CD8-positive, alpha-beta T cell (primary cell): ENCODE measurements at regions of chr2 and their contacts with region 1.

Region 1: GRCh38 chr2:59888015-59888414 is 665.4 kb downstream of the BCL11A start:
- DNase-seq: peak in 8 of 9 experiments; percentile 34 to 87 (median 63)
- ATAC-seq: peak; percentile 88
- H3K4me3 ChIP-seq: peak overlapping the region in 1 of 2 experiments; percentile 31
- H3K4me3 Mint-ChIP-seq: peak overlapping the region; percentile 60
- H3K27ac ChIP-seq: peak overlapping the region; percentile 16 to 21
- H3K27ac Mint-ChIP-seq: peak overlapping the region; percentile 88
- H3K4me1 ChIP-seq: peaks cover 39% of the 10 kb centered on the region
- H3K4me1 Mint-ChIP-seq: peaks cover 47% of the 10 kb centered on the region
- H3K27me3 ChIP-seq: no peaks in the 10 kb centered on the region
- H3K27me3 Mint-ChIP-seq: no peaks in the 10 kb centered on the region
- CTCF ChIP-seq: no peak

Region 2: DNA sequence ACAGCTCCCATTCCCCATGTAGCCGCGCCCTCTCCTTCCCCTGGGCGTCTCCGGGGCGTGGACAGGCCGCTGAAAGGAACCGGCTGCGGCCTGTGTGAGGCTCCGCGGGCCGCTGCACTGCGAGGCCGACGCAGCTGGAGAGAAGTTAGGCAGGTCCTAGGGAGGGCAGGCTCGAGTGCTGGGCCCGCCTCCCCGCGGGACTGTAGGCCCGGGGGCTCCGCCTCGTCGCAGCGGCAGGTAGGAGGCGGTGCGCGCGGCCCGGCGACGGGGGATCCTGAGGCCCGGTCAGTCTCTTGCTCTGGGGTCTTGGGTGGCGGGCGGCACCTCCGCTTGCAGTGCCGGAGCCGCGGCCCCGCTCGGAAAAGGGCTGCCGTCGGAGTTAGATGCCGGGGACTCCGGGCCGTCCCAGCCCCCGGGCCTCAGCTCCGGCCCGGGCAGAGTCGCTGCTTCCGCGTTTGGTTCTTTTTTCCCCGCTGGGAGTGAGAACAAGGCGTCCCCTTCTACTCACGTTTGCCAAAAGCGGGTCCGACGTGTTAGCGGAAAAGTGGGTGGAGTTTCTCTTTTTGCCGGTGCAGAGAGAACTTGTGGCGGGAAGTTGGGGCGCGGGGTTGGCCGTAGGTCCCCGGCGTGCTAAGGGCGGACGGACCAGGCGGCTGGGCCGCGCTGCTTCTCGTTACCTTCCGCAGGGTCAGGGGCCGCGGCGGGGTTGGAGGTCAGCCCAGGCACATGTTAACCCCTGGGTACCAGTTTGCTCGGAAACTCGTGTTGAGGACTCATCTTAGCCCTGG is 1841.2 kb before region 1 on chr2 and contains the start of gene VRK2:
- CTCF ChIA-PET with region 1: no interaction called
- POLR2A ChIA-PET with region 1: no interaction called
- intact Hi-C with region 1: loop called in 1 of 2 experiments (anchors 5 kb)
- DNase-seq: peak; percentile 66 to 92 (median 82)
- ATAC-seq: peak; percentile 90
- H3K4me3 ChIP-seq: peak within 1 kb of the TSS; percentile 73 to 86
- H3K4me3 Mint-ChIP-seq: peak within 1 kb of the TSS; percentile 90
- H3K27ac ChIP-seq: peak within 1 kb of the TSS; percentile 82 to 91
- H3K27ac Mint-ChIP-seq: peak within 1 kb of the TSS; percentile 96
- H3K4me1 ChIP-seq: peaks cover 18% of the 10 kb centered on the region
- H3K4me1 Mint-ChIP-seq: peaks cover 52% of the 10 kb centered on the region
- H3K27me3 ChIP-seq: no peaks in the 10 kb centered on the region
- H3K27me3 Mint-ChIP-seq: no peaks in the 10 kb centered on the region
- CTCF ChIP-seq: no peak
- total RNA-seq, gene VRK2: 11.0 to 11.1 TPM

Region 3: GRCh38 chr2:59910166-59910565 is 22.2 kb after region 1 on chr2:
- CTCF ChIA-PET with region 1: no interaction called
- POLR2A ChIA-PET with region 1: interaction called, 7 read pairs
- intact Hi-C with region 1: loop called in 1 of 2 experiments (anchors 1 kb)
- DNase-seq: peak in 1 of 9 experiments; percentile 14
- ATAC-seq: no peak
- H3K4me3 ChIP-seq: no peak overlapping the region
- H3K4me3 Mint-ChIP-seq: no peak overlapping the region
- H3K27ac ChIP-seq: no peak overlapping the region
- H3K27ac Mint-ChIP-seq: peak overlapping the region; percentile 56
- H3K4me1 ChIP-seq: peaks cover 13% of the 10 kb centered on the region
- H3K4me1 Mint-ChIP-seq: peaks cover 23% of the 10 kb centered on the region
- H3K27me3 ChIP-seq: no peaks in the 10 kb centered on the region
- H3K27me3 Mint-ChIP-seq: no peaks in the 10 kb centered on the region
- CTCF ChIP-seq: no peak

Region 4: GRCh38 chr2:59932341-59932740 is 44.3 kb after region 1 on chr2:
- CTCF ChIA-PET with region 1: interaction called, 3 read pairs
- POLR2A ChIA-PET with region 1: no interaction called
- intact Hi-C with region 1: loop called in 1 of 2 experiments (anchors 5 kb)
- DNase-seq: no peak
- ATAC-seq: no peak
- H3K4me3 ChIP-seq: no peak overlapping the region
- H3K4me3 Mint-ChIP-seq: no peak overlapping the region
- H3K27ac ChIP-seq: no peak overlapping the region
- H3K27ac Mint-ChIP-seq: no peak overlapping the region
- H3K4me1 ChIP-seq: no peaks in the 10 kb centered on the region
- H3K4me1 Mint-ChIP-seq: peaks cover 7% of the 10 kb centered on the region
- H3K27me3 ChIP-seq: no peaks in the 10 kb centered on the region
- H3K27me3 Mint-ChIP-seq: no peaks in the 10 kb centered on the region
- CTCF ChIP-seq: no peak

Region 5: DNA sequence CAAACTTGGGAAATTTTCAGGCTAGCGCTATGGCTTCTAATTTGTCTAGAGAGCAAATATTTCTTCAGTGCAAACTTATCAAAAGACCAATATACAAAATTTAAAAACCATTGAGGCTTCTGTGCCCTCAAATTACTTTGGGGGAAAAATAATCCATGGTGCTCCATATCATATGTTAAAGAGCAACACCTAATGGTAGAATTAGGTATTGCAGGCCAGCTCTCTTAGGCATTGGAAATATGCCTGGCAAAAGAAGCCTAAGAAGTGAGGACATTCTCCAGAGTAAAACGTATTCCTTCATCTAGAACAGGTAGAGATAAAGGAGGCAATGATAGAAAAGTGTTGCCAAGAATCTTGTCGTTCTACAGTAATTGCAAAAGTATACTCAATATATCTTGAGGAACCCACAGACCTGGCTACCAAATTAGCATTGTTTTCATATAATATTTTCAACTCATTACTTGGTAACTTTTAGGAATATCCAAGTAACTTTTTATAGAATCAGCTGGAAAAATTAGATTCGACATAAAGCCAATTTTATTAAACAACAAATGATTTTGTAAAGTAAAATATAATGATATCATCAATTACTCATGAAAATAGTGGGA is 264.3 kb after region 1 on chr2:
- CTCF ChIA-PET with region 1: no interaction called
- POLR2A ChIA-PET with region 1: no interaction called
- intact Hi-C with region 1: loop called in 1 of 2 experiments (anchors 5 kb)
- DNase-seq: peak in 3 of 9 experiments; percentile 20 to 50 (median 24)
- ATAC-seq: no peak
- H3K4me3 ChIP-seq: no peak overlapping the region
- H3K4me3 Mint-ChIP-seq: no peak overlapping the region
- H3K27ac ChIP-seq: no peak overlapping the region
- H3K27ac Mint-ChIP-seq: no peak overlapping the region
- H3K4me1 ChIP-seq: no peaks in the 10 kb centered on the region
- H3K4me1 Mint-ChIP-seq: peaks cover 11% of the 10 kb centered on the region
- H3K27me3 ChIP-seq: no peaks in the 10 kb centered on the region
- H3K27me3 Mint-ChIP-seq: no peaks in the 10 kb centered on the region
- CTCF ChIP-seq: peak; percentile 87

Region 6: DNA sequence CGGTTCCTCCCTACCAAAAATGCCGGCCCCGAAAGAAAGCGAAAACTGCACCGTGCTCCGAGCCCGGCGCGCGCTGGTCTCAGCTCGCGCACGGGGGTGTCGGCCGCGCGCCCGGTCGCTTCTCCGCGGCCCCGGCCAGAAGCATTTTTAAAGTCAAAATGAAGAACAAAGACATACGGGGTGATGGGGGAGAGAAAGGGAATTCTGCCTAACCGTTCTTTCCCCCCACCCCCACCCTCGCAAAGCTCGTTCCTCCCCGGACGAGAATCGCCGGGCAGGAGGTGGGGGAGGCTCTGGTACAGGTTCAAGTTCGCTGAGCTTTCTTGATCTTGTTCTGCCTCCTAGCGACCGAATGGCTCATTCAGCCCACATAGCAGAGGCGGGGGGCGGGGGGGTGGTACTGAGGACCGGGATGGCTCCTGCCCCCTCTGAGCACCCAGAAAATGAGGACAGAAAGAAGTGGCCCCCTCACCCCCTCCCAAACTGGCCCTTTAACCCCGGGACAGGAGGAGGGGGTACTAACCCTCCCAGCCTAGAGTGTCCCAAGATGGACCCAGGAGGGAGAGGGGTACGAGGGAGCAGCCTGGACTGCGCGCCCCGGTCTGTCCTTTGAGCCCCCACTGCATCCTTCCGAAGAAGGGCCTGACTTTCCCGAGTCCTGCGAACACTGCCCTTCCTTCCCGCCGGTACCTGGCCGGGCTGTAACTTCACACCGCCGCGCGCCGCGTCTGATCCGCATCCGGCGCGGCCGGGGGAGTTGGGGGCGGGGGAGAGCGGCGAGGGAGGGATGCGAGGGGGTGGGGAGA is 662.4 kb after region 1 on chr2:
- CTCF ChIA-PET with region 1: interaction called, 3 read pairs
- POLR2A ChIA-PET with region 1: no interaction called
- intact Hi-C with region 1: loop called (anchors 5 kb)
- DNase-seq: peak in 7 of 9 experiments; percentile 20 to 76 (median 53)
- ATAC-seq: peak; percentile 53
- H3K4me3 ChIP-seq: peak overlapping the region; percentile 58 to 67
- H3K4me3 Mint-ChIP-seq: peak overlapping the region; percentile 90
- H3K27ac ChIP-seq: no peak overlapping the region
- H3K27ac Mint-ChIP-seq: peak overlapping the region; percentile 76
- H3K4me1 ChIP-seq: peaks cover 47% of the 10 kb centered on the region
- H3K4me1 Mint-ChIP-seq: peaks cover 35% of the 10 kb centered on the region
- H3K27me3 ChIP-seq: peaks cover 30 to 49% of the 10 kb centered on the region in 2 experiments
- H3K27me3 Mint-ChIP-seq: peaks cover 63% of the 10 kb centered on the region
- CTCF ChIP-seq: peak; percentile 38

Region 7: GRCh38 chr2:60961501-60961900 is 1073.5 kb after region 1 on chr2:
- CTCF ChIA-PET with region 1: no interaction called
- POLR2A ChIA-PET with region 1: no interaction called
- intact Hi-C with region 1: loop called in 1 of 2 experiments (anchors 10 kb)
- DNase-seq: no peak
- ATAC-seq: no peak
- H3K4me3 ChIP-seq: no peak overlapping the region
- H3K4me3 Mint-ChIP-seq: no peak overlapping the region
- H3K27ac ChIP-seq: no peak overlapping the region
- H3K27ac Mint-ChIP-seq: no peak overlapping the region
- H3K4me1 ChIP-seq: peaks cover 20% of the 10 kb centered on the region
- H3K4me1 Mint-ChIP-seq: peaks cover 28% of the 10 kb centered on the region
- H3K27me3 ChIP-seq: no peaks in the 10 kb centered on the region
- H3K27me3 Mint-ChIP-seq: no peaks in the 10 kb centered on the region
- CTCF ChIP-seq: no peak